CD8-positive, alpha-beta T cell (primary cell): ENCODE measurements at regions of chrX and their contacts with region 1.

Region 1: GRCh38 chrX:13750204-13750603 is 15.7 kb downstream of the OFD1 start:
- DNase-seq: peak in 3 of 9 experiments; percentile 12 to 65 (median 53)
- ATAC-seq: peak; percentile 63
- H3K4me3 ChIP-seq: no peak overlapping the region
- H3K4me3 Mint-ChIP-seq: no peak overlapping the region
- H3K27ac ChIP-seq: peak overlapping the region in 1 of 2 experiments; percentile 36
- H3K27ac Mint-ChIP-seq: peak overlapping the region; percentile 64
- H3K4me1 ChIP-seq: peaks cover 6% of the 10 kb centered on the region
- H3K4me1 Mint-ChIP-seq: peaks cover 30% of the 10 kb centered on the region
- H3K27me3 ChIP-seq: no peaks in the 10 kb centered on the region
- H3K27me3 Mint-ChIP-seq: no peaks in the 10 kb centered on the region
- CTCF ChIP-seq: peak; percentile 37

Region 2: DNA sequence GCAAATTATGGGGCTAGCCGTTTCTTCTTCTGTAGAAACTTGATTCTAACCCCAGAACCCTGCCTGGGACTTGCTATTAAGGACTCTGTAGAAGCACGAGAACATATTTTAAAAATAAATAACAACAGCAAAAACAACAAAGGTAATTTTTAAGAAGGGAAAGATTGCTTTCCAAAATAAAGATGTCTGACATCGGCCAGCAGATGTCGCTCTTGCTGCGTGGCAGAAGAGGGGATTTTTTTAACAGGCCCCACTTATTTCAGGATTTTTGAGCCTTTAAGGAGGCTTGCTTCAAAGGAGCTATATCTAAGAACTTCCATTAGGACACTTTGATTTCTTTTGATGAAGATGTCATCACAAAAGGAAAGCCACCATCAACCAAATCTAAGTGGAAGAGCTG is 243.6 kb before region 1 on chrX:
- CTCF ChIA-PET with region 1: interaction called, 4 read pairs
- POLR2A ChIA-PET with region 1: no interaction called
- intact Hi-C with region 1: loop called in 1 of 2 experiments (anchors 5 kb)
- DNase-seq: peak in 8 of 9 experiments; percentile 13 to 70 (median 56)
- ATAC-seq: no peak
- H3K4me3 ChIP-seq: no peak overlapping the region
- H3K4me3 Mint-ChIP-seq: no peak overlapping the region
- H3K27ac ChIP-seq: no peak overlapping the region
- H3K27ac Mint-ChIP-seq: no peak overlapping the region
- H3K4me1 ChIP-seq: no peaks in the 10 kb centered on the region
- H3K4me1 Mint-ChIP-seq: peaks cover 2% of the 10 kb centered on the region
- H3K27me3 ChIP-seq: no peaks in the 10 kb centered on the region
- H3K27me3 Mint-ChIP-seq: no peaks in the 10 kb centered on the region
- CTCF ChIP-seq: peak; percentile 65

Region 3: GRCh38 chrX:13658602-13659001 is 91.6 kb before region 1 on chrX:
- CTCF ChIA-PET with region 1: interaction called, 5 read pairs
- POLR2A ChIA-PET with region 1: no interaction called
- intact Hi-C with region 1: loop called (anchors 1 to 2 kb)
- DNase-seq: peak in 3 of 9 experiments; percentile 23 to 77 (median 63)
- ATAC-seq: peak; percentile 44
- H3K4me3 ChIP-seq: no peak overlapping the region
- H3K4me3 Mint-ChIP-seq: peak overlapping the region; percentile 18
- H3K27ac ChIP-seq: peak overlapping the region in 1 of 2 experiments; percentile 56
- H3K27ac Mint-ChIP-seq: peak overlapping the region; percentile 79
- H3K4me1 ChIP-seq: peaks cover 10% of the 10 kb centered on the region
- H3K4me1 Mint-ChIP-seq: peaks cover 30% of the 10 kb centered on the region
- H3K27me3 ChIP-seq: no peaks in the 10 kb centered on the region
- H3K27me3 Mint-ChIP-seq: no peaks in the 10 kb centered on the region
- CTCF ChIP-seq: peak; percentile 48